Activated CD8-positive, alpha-beta T cell treated with anti-CD3 and anti-CD28 coated beads for 36 hours (primary cell): ENCODE measurements at regions of chr2 and their contacts with region 1.

Region 1: GRCh38 chr2:101151141-101151858 is at the start of gene TBC1D8:
- DNase-seq: peak; percentile 56
- ATAC-seq: peak; percentile 92
- H3K4me3 Mint-ChIP-seq: peak within 1 kb of the TSS; percentile 72
- H3K27ac Mint-ChIP-seq: no peak within 1 kb of the TSS
- H3K4me1 Mint-ChIP-seq: peaks cover 14% of the 10 kb centered on the region
- H3K27me3 Mint-ChIP-seq: peaks cover 27% of the 10 kb centered on the region
- CTCF ChIP-seq: no peak
- total RNA-seq, gene TBC1D8: 3.2 to 3.3 TPM

Region 2: GRCh38 chr2:101012706-101013181 is 138.6 kb before region 1 on chr2:
- CTCF ChIA-PET with region 1: interaction called, 29 read pairs
- POLR2A ChIA-PET with region 1: no interaction called
- intact Hi-C with region 1: no loop called
- DNase-seq: peak; percentile 34
- ATAC-seq: no peak
- H3K4me3 Mint-ChIP-seq: no peak overlapping the region
- H3K27ac Mint-ChIP-seq: no peak overlapping the region
- H3K4me1 Mint-ChIP-seq: peaks cover 22% of the 10 kb centered on the region
- H3K27me3 Mint-ChIP-seq: no peaks in the 10 kb centered on the region
- CTCF ChIP-seq: peak; percentile 90

Region 3: GRCh38 chr2:101036562-101037457 is 114.5 kb before region 1 on chr2:
- CTCF ChIA-PET with region 1: interaction called, 10 read pairs
- POLR2A ChIA-PET with region 1: no interaction called
- intact Hi-C with region 1: no loop called
- DNase-seq: no peak
- ATAC-seq: no peak
- H3K4me3 Mint-ChIP-seq: no peak overlapping the region
- H3K27ac Mint-ChIP-seq: no peak overlapping the region
- H3K4me1 Mint-ChIP-seq: peaks cover 2% of the 10 kb centered on the region
- H3K27me3 Mint-ChIP-seq: no peaks in the 10 kb centered on the region
- CTCF ChIP-seq: peak; percentile 64

Region 4: GRCh38 chr2:101140978-101141657 is 10.2 kb before region 1 on chr2:
- CTCF ChIA-PET with region 1: interaction called, 11 read pairs
- POLR2A ChIA-PET with region 1: no interaction called
- intact Hi-C with region 1: no loop called
- DNase-seq: no peak
- ATAC-seq: no peak
- H3K4me3 Mint-ChIP-seq: no peak overlapping the region
- H3K27ac Mint-ChIP-seq: no peak overlapping the region
- H3K4me1 Mint-ChIP-seq: no peaks in the 10 kb centered on the region
- H3K27me3 Mint-ChIP-seq: peaks cover 10% of the 10 kb centered on the region
- CTCF ChIP-seq: no peak